Cardiac septum (tissue), 1 donor: ENCODE measurements at regions of chr9 and their contacts with region 1.

Region 1: DNA sequence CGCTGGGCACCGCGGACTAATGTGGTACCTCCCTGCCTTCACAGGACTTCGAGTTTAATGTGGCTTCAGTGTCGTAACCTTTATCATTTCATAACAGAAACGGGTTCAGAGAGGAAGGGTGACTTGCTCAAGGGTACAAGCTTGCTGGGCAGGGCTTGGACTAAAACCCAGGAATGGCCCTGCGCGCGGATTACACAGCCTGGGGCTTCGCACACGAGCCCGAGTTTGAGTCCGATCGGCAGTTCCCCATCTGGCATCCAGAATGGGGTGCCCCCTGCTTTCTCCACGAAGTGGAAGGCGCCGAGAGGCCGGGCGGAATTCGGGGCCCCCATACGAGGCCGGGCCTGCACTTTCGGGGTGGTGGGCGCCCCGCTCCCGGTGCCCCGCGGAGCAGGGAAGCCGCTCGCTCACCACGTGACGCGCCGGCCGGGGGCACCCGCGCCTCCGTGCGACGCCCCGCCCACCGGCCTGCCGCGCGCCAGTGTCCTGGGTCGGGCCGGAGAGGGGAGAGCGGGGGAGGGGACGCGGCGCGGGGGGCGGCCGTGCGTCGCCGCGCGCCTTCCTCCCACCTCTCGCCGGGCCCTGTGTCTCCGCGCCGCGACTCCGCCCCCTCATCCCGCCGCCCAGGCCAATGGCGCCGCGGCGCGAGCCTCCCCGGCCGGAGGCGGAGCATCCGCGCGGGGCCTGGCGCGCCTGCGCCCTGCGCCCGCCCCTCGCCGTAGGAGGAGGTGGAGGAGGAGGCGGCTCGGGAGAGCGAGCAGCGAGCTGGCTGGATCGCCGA is at the start of gene SET:
- DNase-seq: peak; percentile 96
- total RNA-seq, gene SET: 212 TPM

Region 2: GRCh38 chr9:128621730-128622455 is 66.8 kb before region 1 on chr9:
- intact Hi-C with region 1: no loop called
- DNase-seq: no peak

Region 3: GRCh38 chr9:128635283-128636023 is 53.2 kb before region 1 on chr9:
- intact Hi-C with region 1: loop called (anchors 2 kb)
- DNase-seq: peak; percentile 92

Region 4: GRCh38 chr9:128656416-128657343 is 32.0 kb before region 1 on chr9 and contains the start of gene DYNC2I2:
- intact Hi-C with region 1: loop called (anchors 2 kb)
- DNase-seq: peak; percentile 99
- total RNA-seq, gene DYNC2I2: 29.6 TPM